RWPE1 (cell line): ENCODE measurements at regions of chr1 and their contacts with region 1.

Region 1: GRCh38 chr1:85259118-85259911 is at the start of gene C1orf52:
- DNase-seq: peak; percentile 88
- H3K27ac ChIP-seq: peak within 1 kb of the TSS; percentile 73
- CTCF ChIP-seq: peak; percentile 97

Region 2: DNA sequence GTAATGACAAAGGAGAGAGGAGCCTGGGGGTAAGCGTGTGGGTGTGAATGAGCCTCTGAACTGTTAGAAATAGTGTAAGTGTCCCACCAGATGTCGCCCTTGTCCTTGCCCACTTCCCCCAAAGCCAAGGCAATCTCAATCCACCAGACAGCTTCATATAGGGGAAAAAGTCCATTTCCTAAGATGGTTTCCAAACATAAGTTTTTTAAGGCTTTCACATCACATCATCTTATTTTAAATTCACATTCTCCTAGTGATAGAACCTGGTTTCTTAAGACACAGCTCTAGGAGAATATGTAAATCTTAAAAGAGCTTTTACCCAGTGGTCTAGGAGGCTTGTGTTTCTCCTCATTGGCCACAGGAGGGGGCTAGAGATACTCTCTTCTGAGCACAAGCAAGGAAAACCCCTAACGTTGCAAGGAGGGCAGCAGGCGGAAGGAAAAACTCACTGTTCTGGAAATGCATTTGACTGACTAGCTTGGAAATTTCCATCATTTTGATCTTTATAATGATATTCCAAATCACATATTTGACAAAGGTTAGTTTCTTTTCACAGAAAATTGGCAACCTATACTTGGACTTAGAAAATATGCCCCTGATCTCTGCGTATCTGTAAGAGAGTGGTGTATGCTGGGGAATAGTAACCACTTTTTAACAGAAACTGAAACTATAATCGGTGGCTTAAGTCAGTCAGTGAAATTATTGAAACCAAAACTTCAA is 314.4 kb before region 1 on chr1:
- CTCF ChIA-PET with region 1: interaction called, 16 read pairs
- POLR2A ChIA-PET with region 1: no interaction called
- DNase-seq: peak; percentile 74
- H3K27ac ChIP-seq: no peak overlapping the region
- CTCF ChIP-seq: peak; percentile 94

Region 3: GRCh38 chr1:85109475-85109874 is 149.8 kb before region 1 on chr1:
- CTCF ChIA-PET with region 1: interaction called, 26 read pairs
- POLR2A ChIA-PET with region 1: no interaction called
- DNase-seq: peak; percentile 71
- H3K27ac ChIP-seq: no peak overlapping the region
- CTCF ChIP-seq: peak; percentile 49